Activated CD8-positive, alpha-beta T cell treated with anti-CD3 and anti-CD28 coated beads for 36 hours (primary cell): ENCODE measurements at regions of chr18 and their contacts with region 1.

Region 1: DNA sequence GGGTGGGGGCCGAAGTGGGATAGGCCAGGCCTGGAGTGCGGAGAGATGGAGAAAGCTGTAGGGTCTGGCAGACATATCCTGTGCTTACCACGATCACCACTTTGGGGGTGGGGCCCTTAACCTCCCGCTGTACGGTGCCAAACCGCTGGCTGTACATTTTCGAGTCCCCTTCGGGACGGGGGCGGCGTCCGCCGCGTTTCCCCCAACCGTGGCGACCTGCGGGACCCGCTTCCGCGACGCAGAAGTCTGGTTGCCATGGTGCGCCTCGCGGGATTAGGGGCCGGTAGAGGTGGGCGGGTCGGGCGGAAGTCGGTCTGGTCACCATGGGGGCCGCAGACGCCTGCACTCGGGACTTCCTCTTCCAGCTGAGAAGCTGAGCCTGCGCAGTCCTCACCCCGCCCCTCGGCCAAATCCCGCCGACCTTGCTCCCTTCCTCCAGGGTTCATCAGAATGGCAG is at the start of gene CFAP53:
- DNase-seq: peak; percentile 95
- ATAC-seq: peak; percentile 91
- H3K4me3 Mint-ChIP-seq: peak within 1 kb of the TSS; percentile 70
- H3K27ac Mint-ChIP-seq: peak within 1 kb of the TSS; percentile 79
- H3K4me1 Mint-ChIP-seq: peaks cover 27% of the 10 kb centered on the region
- H3K27me3 Mint-ChIP-seq: no peaks in the 10 kb centered on the region
- CTCF ChIP-seq: no peak
- total RNA-seq, gene CFAP53: 0.27 to 0.76 TPM

Region 2: GRCh38 chr18:50218432-50219197 is 47.7 kb before region 1 on chr18:
- CTCF ChIA-PET with region 1: interaction called, 21 read pairs
- POLR2A ChIA-PET with region 1: no interaction called
- intact Hi-C with region 1: no loop called
- DNase-seq: peak; percentile 58
- ATAC-seq: peak; percentile 60
- H3K4me3 Mint-ChIP-seq: no peak overlapping the region
- H3K27ac Mint-ChIP-seq: no peak overlapping the region
- H3K4me1 Mint-ChIP-seq: no peaks in the 10 kb centered on the region
- H3K27me3 Mint-ChIP-seq: peaks cover 21% of the 10 kb centered on the region
- CTCF ChIP-seq: peak; percentile 46

Region 3: GRCh38 chr18:50281295-50281971 is 15.2 kb after region 1 on chr18 and contains the start of gene MBD1:
- CTCF ChIA-PET with region 1: interaction called, 17 read pairs
- POLR2A ChIA-PET with region 1: interaction called, 32 read pairs
- intact Hi-C with region 1: no loop called
- DNase-seq: peak; percentile 97
- ATAC-seq: peak; percentile 92
- H3K4me3 Mint-ChIP-seq: peak within 1 kb of the TSS; percentile 91
- H3K27ac Mint-ChIP-seq: peak within 1 kb of the TSS; percentile 96
- H3K4me1 Mint-ChIP-seq: peaks cover 47% of the 10 kb centered on the region
- H3K27me3 Mint-ChIP-seq: no peaks in the 10 kb centered on the region
- CTCF ChIP-seq: no peak
- total RNA-seq, gene MBD1: 67.4 to 69.0 TPM

Region 4: GRCh38 chr18:50287441-50288347 is 21.4 kb after region 1 on chr18 and contains the start of gene CXXC1:
- CTCF ChIA-PET with region 1: interaction called, 11 read pairs
- POLR2A ChIA-PET with region 1: interaction called, 32 read pairs
- intact Hi-C with region 1: loop called (anchors 1 kb)
- DNase-seq: peak; percentile 98
- ATAC-seq: peak; percentile 92
- H3K4me3 Mint-ChIP-seq: peak within 1 kb of the TSS; percentile 96
- H3K27ac Mint-ChIP-seq: peak within 1 kb of the TSS; percentile 95
- H3K4me1 Mint-ChIP-seq: peaks cover 33% of the 10 kb centered on the region
- H3K27me3 Mint-ChIP-seq: no peaks in the 10 kb centered on the region
- CTCF ChIP-seq: no peak
- total RNA-seq, gene CXXC1: 87.0 to 88.0 TPM

Region 5: DNA sequence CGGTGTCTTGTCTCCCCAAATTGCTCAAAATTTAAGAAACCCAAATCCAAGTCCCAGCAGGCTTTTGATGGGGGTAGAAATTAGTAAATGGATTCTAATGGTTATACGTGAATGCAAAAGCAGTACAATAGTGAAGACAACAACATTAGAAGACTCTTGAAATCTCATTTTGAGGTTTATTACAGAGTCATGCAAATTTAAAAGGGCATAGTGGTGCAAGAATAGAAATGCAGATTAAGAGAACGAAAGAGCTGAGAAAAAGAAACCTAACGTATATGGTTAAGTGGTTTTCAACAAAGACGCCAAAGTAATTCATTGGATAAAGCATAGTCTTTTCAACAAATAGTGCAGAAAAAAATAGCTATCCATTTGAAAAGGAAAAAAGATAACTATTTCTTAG is 54.4 kb after region 1 on chr18:
- CTCF ChIA-PET with region 1: no interaction called
- POLR2A ChIA-PET with region 1: no interaction called
- intact Hi-C with region 1: no loop called
- DNase-seq: no peak
- ATAC-seq: peak; percentile 49
- H3K4me3 Mint-ChIP-seq: peak overlapping the region; percentile 31
- H3K27ac Mint-ChIP-seq: peak overlapping the region; percentile 54
- H3K4me1 Mint-ChIP-seq: peaks cover 10% of the 10 kb centered on the region
- H3K27me3 Mint-ChIP-seq: peaks cover 3% of the 10 kb centered on the region
- CTCF ChIP-seq: no peak